ENCODE measurements at regions of chr3 and their contacts with region 1.

Region 1: DNA sequence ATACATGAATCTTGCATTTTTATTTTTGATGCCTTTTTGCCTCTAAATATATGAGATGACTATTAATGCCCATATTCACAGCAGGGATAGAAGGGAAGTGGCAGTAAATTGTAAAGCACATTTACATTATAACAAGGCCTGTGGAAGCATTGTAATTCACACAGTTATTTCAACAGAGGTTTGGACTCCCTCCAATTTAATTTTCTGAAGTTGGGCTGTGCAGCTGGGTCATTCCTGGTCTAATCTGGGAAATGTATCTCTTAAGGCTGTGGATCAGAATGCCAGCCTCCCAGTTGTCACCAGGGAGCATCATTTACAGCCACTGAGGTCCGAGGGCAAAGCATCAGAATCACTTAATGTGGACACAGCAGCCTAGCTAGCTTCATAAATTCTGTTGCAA is 434.5 kb downstream of the MFSD1 start:
- DNase-seq: no peak
- H3K4me3 ChIP-seq: no peak overlapping the region
- H3K27ac ChIP-seq: no peak overlapping the region
- H3K4me1 ChIP-seq: no peaks in the 10 kb centered on the region
- H3K27me3 ChIP-seq: no peaks in the 10 kb centered on the region
- CTCF ChIP-seq: no peak

Region 2: GRCh38 chr3:158602227-158602626 is 634.1 kb before region 1 on chr3:
- CTCF ChIA-PET with region 1: no interaction called
- POLR2A ChIA-PET with region 1: no interaction called
- intact Hi-C with region 1: loop called (anchors 5 kb)
- DNase-seq: no peak
- H3K4me3 ChIP-seq: no peak overlapping the region
- H3K27ac ChIP-seq: no peak overlapping the region
- H3K4me1 ChIP-seq: no peaks in the 10 kb centered on the region
- H3K27me3 ChIP-seq: no peaks in the 10 kb centered on the region
- CTCF ChIP-seq: no peak

Region 3: GRCh38 chr3:159378396-159379194 is 142.3 kb after region 1 on chr3:
- CTCF ChIA-PET with region 1: no interaction called
- POLR2A ChIA-PET with region 1: no interaction called
- intact Hi-C with region 1: no loop called
- DNase-seq: no peak
- H3K4me3 ChIP-seq: no peak overlapping the region
- H3K27ac ChIP-seq: no peak overlapping the region
- H3K4me1 ChIP-seq: no peaks in the 10 kb centered on the region
- H3K27me3 ChIP-seq: no peaks in the 10 kb centered on the region
- CTCF ChIP-seq: no peak